ENCODE measurements at regions of chr13 and their contacts with region 1.

Region 1: DNA sequence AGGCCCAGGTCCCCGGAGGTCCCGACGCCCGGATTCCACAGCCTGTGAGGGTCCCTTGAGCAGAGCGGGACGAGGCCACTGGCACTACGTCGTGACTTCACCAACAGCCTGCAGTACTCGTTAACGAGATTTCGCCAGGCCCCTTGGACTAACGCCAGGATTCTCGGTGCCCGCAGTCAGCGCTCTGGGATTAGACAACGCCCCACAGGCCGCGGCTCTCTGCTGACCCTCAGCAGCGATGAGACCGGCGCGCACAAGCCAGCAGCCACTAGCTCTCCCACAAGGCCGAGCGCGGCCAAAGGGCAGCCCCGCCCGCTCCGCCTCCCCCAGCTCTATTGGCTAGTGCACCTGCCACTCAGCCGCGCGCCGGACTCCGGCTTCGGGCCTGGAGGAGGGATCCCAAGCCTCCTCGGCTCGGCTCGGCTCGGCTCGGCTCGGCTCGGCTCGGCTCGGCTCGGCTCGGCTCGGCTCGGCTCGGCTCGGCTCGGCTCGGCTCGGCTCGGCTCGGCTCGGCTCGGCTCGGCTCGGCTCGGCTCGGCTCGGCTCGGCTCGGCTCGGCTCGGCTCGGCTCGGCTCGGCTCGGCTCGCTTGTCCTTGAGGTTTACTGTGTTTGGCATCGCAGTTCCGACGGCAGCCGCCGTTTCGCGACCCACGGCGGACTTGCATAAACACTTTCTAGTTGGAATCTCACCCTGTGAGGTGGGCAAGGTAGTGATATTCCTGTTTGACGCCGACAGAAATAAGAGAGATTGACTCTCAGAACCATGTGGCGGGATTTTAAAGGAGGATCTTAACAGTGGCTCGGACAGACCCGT is 231.7 kb upstream of the SERP2 start:
- DNase-seq: peak; percentile 98 to 100 (median 98)
- ATAC-seq: peak; percentile 99 to 100 (median 100)
- H3K4me3 ChIP-seq: peak overlapping the region; percentile 28 to 73 (median 58)
- H3K27ac ChIP-seq: peak overlapping the region; percentile 86 to 99 (median 96)
- H3K4me1 ChIP-seq: peaks cover 0 to 21% (median 9%) of the 10 kb centered on the region in 12 donors
- H3K27me3 ChIP-seq: no peaks in the 10 kb centered on the region
- CTCF ChIP-seq: peak in 1 of 12 donors; percentile 16
- POLR2A ChIP-seq: peak; percentile 84 to 94

Region 2: GRCh38 chr13:44116562-44117332 is 25.2 kb before region 1 on chr13:
- intact Hi-C with region 1: loop called in 1 of 10 experiments (anchors 2 kb)
- DNase-seq: peak in 4 of 5 donors; percentile 28 to 73 (median 48)
- ATAC-seq: peak; percentile 90 to 97 (median 94)
- H3K4me3 ChIP-seq: peak overlapping the region in 1 of 12 donors; percentile 4
- H3K27ac ChIP-seq: peak overlapping the region; percentile 40 to 81 (median 72)
- H3K4me1 ChIP-seq: peaks cover 0 to 30% (median 22%) of the 10 kb centered on the region in 12 donors
- H3K27me3 ChIP-seq: no peaks in the 10 kb centered on the region
- CTCF ChIP-seq: peak in 7 of 12 donors; percentile 10 to 30 (median 15)
- POLR2A ChIP-seq: no peak